ENCODE measurements at regions of chr5 and their contacts with region 1.

Region 1: DNA sequence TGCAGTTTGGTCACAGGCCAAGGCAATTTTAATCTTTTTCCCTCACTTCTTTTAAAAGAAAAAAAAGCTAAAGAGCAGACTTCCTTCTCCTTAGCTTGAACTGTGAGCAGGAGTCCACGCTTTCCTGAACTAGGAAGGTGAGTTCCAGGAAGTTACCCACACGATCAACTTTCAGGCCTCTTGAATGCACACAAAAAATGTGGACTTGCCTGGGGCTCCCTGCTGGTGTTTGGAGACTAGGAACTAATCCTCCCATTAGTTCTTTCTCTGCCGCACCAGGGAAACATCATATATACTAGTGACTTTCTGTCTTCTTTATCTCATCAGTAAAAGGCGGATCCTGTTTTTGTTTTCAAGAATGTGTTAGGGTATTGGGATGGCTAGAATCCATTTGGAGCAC is 240.0 kb downstream of the GOLPH3 start:
- DNase-seq: no peak
- H3K4me3 ChIP-seq: no peak overlapping the region
- H3K4me3 Mint-ChIP-seq: no peak overlapping the region
- H3K27ac Mint-ChIP-seq: no peak overlapping the region
- H3K4me1 ChIP-seq: no peaks in the 10 kb centered on the region
- H3K4me1 Mint-ChIP-seq: no peaks in the 10 kb centered on the region
- H3K27me3 ChIP-seq: no peaks in the 10 kb centered on the region
- H3K27me3 Mint-ChIP-seq: peaks cover 3% of the 10 kb centered on the region
- CTCF ChIP-seq: no peak

Region 2: GRCh38 chr5:31806561-31806960 is 127.6 kb before region 1 on chr5:
- CTCF ChIA-PET with region 1: no interaction called
- POLR2A ChIA-PET with region 1: no interaction called
- intact Hi-C with region 1: no loop called
- DNase-seq: no peak
- H3K4me3 ChIP-seq: no peak overlapping the region
- H3K4me3 Mint-ChIP-seq: no peak overlapping the region
- H3K27ac Mint-ChIP-seq: no peak overlapping the region
- H3K4me1 ChIP-seq: no peaks in the 10 kb centered on the region
- H3K4me1 Mint-ChIP-seq: no peaks in the 10 kb centered on the region
- H3K27me3 ChIP-seq: no peaks in the 10 kb centered on the region
- H3K27me3 Mint-ChIP-seq: peaks cover 11% of the 10 kb centered on the region
- CTCF ChIP-seq: no peak

Region 3: GRCh38 chr5:31900296-31900840 is 33.8 kb before region 1 on chr5:
- CTCF ChIA-PET with region 1: no interaction called
- POLR2A ChIA-PET with region 1: no interaction called
- intact Hi-C with region 1: no loop called
- DNase-seq: no peak
- H3K4me3 ChIP-seq: no peak overlapping the region
- H3K4me3 Mint-ChIP-seq: no peak overlapping the region
- H3K27ac Mint-ChIP-seq: no peak overlapping the region
- H3K4me1 ChIP-seq: no peaks in the 10 kb centered on the region
- H3K4me1 Mint-ChIP-seq: no peaks in the 10 kb centered on the region
- H3K27me3 ChIP-seq: no peaks in the 10 kb centered on the region
- H3K27me3 Mint-ChIP-seq: peaks cover 8% of the 10 kb centered on the region
- CTCF ChIP-seq: no peak

Region 4: DNA sequence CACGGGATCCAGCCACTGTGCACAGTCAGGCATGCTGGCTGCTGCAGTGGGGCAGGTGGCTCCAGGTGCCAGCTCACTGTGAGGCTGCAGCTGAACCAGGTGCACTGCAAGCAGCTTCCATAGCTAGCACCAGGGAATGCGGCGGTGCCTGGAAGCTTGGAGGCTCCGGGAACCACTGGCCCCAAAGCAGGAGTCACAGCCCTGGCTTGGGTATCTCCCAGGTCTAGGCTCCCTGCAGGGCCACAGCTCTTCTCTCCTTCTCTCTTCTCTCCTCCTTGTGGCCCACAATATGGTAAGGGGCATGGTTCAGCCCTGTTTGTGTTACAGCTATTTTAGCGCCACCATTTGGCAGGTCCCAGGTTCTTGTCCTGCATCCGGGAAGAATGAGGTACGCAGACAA is 385.2 kb after region 1 on chr5:
- CTCF ChIA-PET with region 1: no interaction called
- POLR2A ChIA-PET with region 1: interaction called, 16 read pairs
- intact Hi-C with region 1: no loop called
- DNase-seq: no peak
- H3K4me3 ChIP-seq: no peak overlapping the region
- H3K4me3 Mint-ChIP-seq: no peak overlapping the region
- H3K27ac Mint-ChIP-seq: no peak overlapping the region
- H3K4me1 ChIP-seq: no peaks in the 10 kb centered on the region
- H3K4me1 Mint-ChIP-seq: no peaks in the 10 kb centered on the region
- H3K27me3 ChIP-seq: no peaks in the 10 kb centered on the region
- H3K27me3 Mint-ChIP-seq: no peaks in the 10 kb centered on the region
- CTCF ChIP-seq: no peak

Measured in Caco-2 (cell line).